Common myeloid progenitor, CD34-positive (primary cell): ENCODE measurements at regions of chr4 and their contacts with region 1.

Region 1: GRCh38 chr4:57051095-57051494 is 59.1 kb downstream of the IGFBP7 start:
- DNase-seq: peak in 2 of 3 donors; percentile 48 to 70
- H3K4me3 ChIP-seq: no peak overlapping the region
- H3K27ac ChIP-seq: no peak overlapping the region
- H3K4me1 ChIP-seq: peaks cover 0 to 3% (median 0%) of the 10 kb centered on the region in 4 experiments
- H3K27me3 ChIP-seq: no peaks in the 10 kb centered on the region

Region 2: DNA sequence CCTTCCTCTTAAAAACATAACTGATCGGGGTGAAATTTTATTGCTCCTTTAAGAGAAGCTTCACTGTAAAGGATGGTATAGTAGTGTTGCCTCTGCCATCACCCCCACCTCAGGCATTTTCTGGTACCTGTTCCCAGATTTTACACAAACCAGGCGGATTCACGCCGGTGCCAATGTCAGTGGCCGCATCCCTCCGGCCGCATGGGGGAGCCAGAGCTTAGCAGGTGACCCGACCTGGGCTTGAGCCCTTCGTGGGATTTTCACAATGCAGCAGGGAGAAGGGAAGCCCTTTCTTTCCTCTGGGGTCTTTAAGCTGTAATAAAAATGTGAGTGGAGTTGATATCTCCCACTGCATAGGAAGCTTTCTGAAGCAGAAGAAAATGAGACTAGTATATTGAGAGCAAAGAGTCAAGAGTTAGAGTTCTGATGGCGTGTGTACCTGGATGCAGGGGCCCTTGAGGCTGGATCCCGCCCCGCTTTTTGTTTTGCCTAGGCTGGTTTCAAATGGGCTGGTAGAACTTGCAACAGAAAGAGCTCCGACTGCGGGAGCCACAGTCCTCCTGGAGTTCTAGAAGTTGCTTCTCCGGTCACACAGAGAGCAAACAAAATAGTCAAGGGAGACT is 13.0 kb before region 1 on chr4:
- CTCF ChIA-PET with region 1: interaction called, 23 read pairs
- POLR2A ChIA-PET with region 1: no interaction called
- DNase-seq: peak; percentile 30 to 56 (median 51)
- H3K4me3 ChIP-seq: no peak overlapping the region
- H3K27ac ChIP-seq: no peak overlapping the region
- H3K4me1 ChIP-seq: peaks cover 0 to 6% (median 5%) of the 10 kb centered on the region in 4 experiments
- H3K27me3 ChIP-seq: no peaks in the 10 kb centered on the region